Panc1 (cell line): ENCODE measurements at regions of chr4 and their contacts with region 1.

Region 1: DNA sequence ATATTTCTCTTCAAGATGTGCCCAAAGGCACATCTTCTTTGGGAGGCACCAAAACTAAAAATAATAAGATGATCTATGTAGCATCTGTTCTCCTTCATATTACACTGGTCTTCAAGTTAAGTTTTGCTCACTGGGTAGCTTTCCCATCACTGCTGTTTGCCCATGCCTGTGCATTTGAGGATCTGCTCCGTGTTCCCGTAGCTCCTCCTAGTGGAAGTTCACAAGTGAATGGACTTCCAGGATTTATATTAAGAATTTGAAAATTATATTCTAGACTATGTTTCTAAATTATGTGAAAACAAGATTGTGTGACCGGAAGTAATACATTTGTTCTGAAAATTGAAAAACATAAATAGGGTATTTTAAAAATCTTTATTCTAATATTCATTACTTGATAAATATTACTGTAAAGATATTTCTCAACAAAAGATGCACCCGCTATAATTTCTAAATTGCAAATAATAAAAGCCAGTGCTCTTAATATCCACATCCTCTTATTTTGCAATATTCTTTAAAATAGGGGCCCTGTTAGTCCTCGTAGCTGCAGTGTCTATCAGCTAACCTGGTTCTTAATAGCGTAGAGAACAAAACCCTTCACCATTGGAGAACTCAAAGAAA is 147.7 kb downstream of the RBM46 start:
- DNase-seq: no peak
- ATAC-seq: no peak
- H3K4me3 ChIP-seq: no peak overlapping the region
- H3K27ac ChIP-seq: no peak overlapping the region
- H3K4me1 ChIP-seq: no peaks in the 10 kb centered on the region
- H3K27me3 ChIP-seq: no peaks in the 10 kb centered on the region
- CTCF ChIP-seq: peak; percentile 47

Region 2: GRCh38 chr4:154807042-154807630 is 121.6 kb before region 1 on chr4:
- CTCF ChIA-PET with region 1: no interaction called
- POLR2A ChIA-PET with region 1: no interaction called
- in situ Hi-C with region 1: no loop called
- intact Hi-C with region 1: loop called (anchors 5 kb)
- DNase-seq: peak; percentile 13
- ATAC-seq: no peak
- H3K4me3 ChIP-seq: no peak overlapping the region
- H3K27ac ChIP-seq: no peak overlapping the region
- H3K4me1 ChIP-seq: no peaks in the 10 kb centered on the region
- H3K27me3 ChIP-seq: no peaks in the 10 kb centered on the region
- CTCF ChIP-seq: peak; percentile 47; the same call in 1 of the 2 replicates

Region 3: GRCh38 chr4:154854362-154854761 is 74.4 kb before region 1 on chr4:
- CTCF ChIA-PET with region 1: no interaction called
- POLR2A ChIA-PET with region 1: no interaction called
- in situ Hi-C with region 1: no loop called
- intact Hi-C with region 1: loop called (anchors 2 kb)
- DNase-seq: no peak
- ATAC-seq: peak; percentile 63; the same call in 1 of the 2 replicates
- H3K4me3 ChIP-seq: no peak overlapping the region
- H3K27ac ChIP-seq: no peak overlapping the region
- H3K4me1 ChIP-seq: no peaks in the 10 kb centered on the region
- H3K27me3 ChIP-seq: no peaks in the 10 kb centered on the region
- CTCF ChIP-seq: peak; percentile 31